Left cardiac atrium (tissue), 4 donors: ENCODE measurements at regions of chr6 and their contacts with region 1.

Region 1: DNA sequence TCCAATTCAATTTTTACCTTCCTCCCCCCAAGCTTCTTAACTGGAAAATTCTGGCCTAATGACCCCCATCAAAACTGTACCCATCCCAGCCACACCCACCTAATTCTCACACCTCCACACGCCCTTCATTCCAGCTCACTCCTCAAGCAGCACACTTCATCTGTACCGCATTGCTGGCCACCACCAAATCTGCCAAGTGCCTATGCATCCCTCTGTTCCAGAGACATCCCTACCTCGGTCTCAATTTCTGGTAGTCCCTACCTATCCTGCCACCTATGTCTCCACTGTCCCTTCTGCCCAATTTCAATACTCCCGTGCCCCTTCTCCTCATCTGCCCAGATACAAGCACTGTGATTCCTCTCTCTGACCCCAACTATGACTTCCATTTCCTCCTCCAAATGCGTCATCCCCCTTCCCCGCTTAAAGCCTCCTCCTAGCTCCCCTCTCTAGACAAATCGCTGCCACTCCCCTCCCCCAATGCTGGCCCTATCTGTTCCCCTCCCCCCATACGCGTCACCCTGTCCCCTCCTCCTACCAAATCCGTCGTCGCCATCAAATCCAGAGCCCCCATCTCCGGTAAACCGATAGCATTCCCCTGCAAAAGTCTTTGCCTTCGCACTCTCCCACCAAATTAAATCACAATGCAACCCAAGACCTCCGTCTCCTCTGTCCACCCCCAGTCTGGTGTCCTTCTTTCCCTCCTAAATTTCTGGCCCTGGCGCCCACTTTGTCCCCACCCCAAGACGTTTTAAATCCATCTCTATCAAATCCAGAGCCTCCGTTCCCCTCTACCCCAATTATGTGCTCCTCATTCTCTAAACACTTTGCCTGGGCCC is 1.2 kb downstream of the MTCH1 start:
- DNase-seq: peak; percentile 71
- ATAC-seq: peak; percentile 13 to 19

Region 2: GRCh38 chr6:36350681-36351571 is 633.9 kb before region 1 on chr6:
- intact Hi-C with region 1: no loop called
- DNase-seq: peak; percentile 74
- ATAC-seq: peak; percentile 60 to 95

Region 3: GRCh38 chr6:36800223-36801076 is 184.3 kb before region 1 on chr6:
- intact Hi-C with region 1: no loop called
- DNase-seq: no peak
- ATAC-seq: no peak

Region 4: DNA sequence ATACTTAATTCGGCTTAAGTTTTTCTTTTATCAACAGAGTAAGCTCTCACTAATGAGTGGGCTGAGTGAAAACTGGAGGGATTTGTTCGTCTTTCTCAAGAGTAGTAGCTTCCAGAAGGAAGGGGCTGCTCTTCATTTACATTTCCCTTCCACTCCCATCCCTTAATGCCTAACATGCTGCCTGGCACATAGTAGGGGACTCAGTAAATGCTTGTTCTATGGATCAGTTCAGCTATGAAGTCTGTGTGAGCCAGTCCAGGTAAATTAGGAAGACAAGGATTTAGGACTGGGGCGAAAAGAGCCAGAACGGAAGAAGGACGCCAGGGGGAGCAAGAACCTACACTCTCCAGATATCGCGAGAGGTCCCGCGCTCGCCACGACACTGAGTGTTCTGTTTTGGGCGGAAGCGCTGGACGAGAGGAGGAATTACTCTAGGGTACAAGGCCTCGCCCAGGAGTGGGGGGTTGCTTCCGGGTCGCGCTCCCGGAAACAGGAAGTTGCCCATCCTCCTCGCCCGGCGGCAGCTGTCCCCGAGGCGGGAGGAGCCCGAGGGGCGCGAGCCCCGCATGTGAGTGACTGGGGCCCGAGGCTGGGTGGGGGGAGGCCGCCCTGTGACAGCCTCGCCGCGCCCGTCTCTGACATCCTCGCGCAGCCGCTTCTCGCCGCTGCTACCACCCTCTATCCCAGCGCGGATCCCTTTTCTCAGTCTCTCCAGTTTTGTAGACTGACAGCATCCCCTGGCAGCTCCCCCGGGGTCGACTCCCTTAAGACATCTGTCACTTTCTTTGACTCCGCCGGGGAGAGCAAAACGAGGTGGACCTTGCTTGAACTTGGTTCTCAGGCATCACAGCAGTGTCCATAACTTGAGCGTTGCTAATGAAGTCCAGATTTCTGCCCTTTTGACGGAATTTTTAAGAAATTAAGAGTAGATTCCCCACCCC is 99.1 kb before region 1 on chr6 and contains the start of gene C6orf89:
- intact Hi-C with region 1: loop called (anchors 5 kb)
- DNase-seq: peak; percentile 99
- ATAC-seq: peak; percentile 100
- total RNA-seq, gene C6orf89: 62.9 to 74.1 TPM

Region 5: DNA sequence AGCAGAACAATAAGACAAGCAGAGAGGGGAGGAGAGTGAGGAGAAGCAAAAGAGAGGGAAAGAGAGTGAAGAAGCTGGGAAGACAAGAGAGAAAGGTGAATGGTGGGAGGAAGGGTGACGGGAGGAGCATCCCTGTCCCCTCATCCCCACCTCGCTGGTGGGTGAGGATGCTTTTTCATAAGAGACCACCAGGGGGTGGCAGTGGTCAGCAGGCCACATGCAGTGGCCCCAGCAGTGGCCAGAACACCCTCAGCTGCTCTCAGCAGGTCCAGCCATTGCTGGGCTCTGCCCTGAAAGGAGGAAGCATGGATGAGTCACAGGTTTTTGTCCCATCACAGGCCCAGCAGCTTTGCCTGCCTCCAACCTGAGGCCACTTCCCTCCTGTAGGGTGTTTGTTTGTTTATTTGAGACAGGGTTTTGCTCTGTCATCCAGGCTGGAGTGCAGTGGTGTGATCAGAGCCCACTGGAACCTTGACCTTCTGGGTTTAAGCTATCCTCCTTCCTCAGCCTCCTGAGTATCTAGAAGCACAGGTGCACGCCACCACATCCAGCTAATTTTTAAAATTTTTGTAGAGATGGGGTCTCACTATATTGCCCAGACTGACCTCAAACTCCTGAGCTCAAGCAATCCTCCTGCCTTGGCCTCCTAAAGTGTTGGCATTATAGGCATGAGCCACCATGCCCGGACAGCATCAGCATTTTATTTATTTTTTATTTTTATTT is 44.6 kb after region 1 on chr6:
- intact Hi-C with region 1: no loop called
- DNase-seq: peak; percentile 81
- ATAC-seq: peak; percentile 88 to 93

Region 6: DNA sequence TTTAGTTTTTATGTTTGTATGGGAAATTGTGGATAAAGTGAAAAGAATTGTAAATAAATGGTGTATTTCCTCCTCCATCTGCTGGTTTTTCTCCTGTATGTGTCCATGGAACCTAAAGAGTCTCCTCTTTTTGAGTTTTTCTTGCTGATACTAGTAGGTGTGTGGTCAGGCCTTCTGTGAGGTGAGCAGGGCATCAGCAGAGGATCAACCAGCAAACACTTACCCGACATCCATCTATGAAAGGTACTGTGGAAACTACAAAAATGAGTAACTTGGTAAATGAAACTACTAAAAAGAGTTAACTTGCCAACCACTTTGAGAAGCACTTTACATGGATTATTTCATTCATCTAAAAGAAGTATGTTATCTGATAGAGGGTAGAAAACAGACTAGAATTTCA is 348.1 kb after region 1 on chr6:
- intact Hi-C with region 1: no loop called
- DNase-seq: no peak
- ATAC-seq: no peak